SK-N-SH (cell line): ENCODE measurements at regions of chr22 and their contacts with region 1.

Region 1: GRCh38 chr22:22576244-22576988 is 17.4 kb upstream of the PRAME start:
- DNase-seq: peak; percentile 79
- H3K4me3 ChIP-seq: peak overlapping the region in 1 of 2 experiments; percentile 24; a peak in 1 of 4 replicates
- H3K27ac ChIP-seq: no peak overlapping the region
- H3K4me1 ChIP-seq: no peaks in the 10 kb centered on the region
- H3K27me3 ChIP-seq: peaks cover 18% of the 10 kb centered on the region; the same call in 1 of the 2 replicates
- CTCF ChIP-seq: peak; percentile 76
- EP300 ChIP-seq: no peak
- RAD21 ChIP-seq: peak; percentile 68

Region 2: GRCh38 chr22:22558972-22559603 is 17.3 kb before region 1 on chr22 and contains the start of gene PRAME:
- CTCF ChIA-PET with region 1: interaction called, 21 read pairs
- POLR2A ChIA-PET with region 1: interaction called, 3 read pairs
- DNase-seq: peak; percentile 88
- H3K4me3 ChIP-seq: peak within 1 kb of the TSS; percentile 58 to 92
- H3K27ac ChIP-seq: peak within 1 kb of the TSS; percentile 87 to 89
- H3K4me1 ChIP-seq: peaks cover 4 to 31% of the 10 kb centered on the region in 2 experiments; a peak in 3 of 4 replicates
- H3K27me3 ChIP-seq: no peaks in the 10 kb centered on the region
- CTCF ChIP-seq: peak; percentile 98
- EP300 ChIP-seq: peak; percentile 31 to 54; a peak in 1 of 4 replicates
- RAD21 ChIP-seq: peak; percentile 67
- polyA plus RNA-seq, gene PRAME: 193 and 241 TPM in 2 replicates

Region 3: DNA sequence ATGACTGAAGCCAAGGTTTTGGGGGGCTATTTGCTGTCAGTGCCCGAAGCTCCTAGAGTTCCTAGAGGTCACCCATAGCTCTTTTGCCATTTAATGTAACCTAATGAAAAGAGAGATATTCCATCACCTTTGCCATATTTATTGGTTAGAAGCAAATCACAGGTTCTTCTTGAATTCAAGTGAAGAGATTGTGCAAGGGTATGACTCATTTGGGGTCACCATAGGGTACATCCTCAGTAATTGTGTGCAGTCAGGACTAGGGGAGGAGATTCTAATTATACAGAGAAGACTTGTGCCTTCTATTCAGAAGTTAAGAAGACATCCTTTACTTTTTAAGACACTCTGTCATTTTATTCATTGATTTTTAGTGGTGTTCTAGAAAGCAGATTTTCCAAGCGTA is 10.4 kb before region 1 on chr22:
- CTCF ChIA-PET with region 1: interaction called, 30 read pairs
- POLR2A ChIA-PET with region 1: no interaction called
- DNase-seq: no peak
- H3K4me3 ChIP-seq: no peak overlapping the region
- H3K27ac ChIP-seq: no peak overlapping the region
- H3K4me1 ChIP-seq: no peaks in the 10 kb centered on the region
- H3K27me3 ChIP-seq: peaks cover 24% of the 10 kb centered on the region
- CTCF ChIP-seq: no peak
- EP300 ChIP-seq: no peak
- RAD21 ChIP-seq: no peak

Region 4: GRCh38 chr22:22593964-22594656 is 17.7 kb after region 1 on chr22:
- CTCF ChIA-PET with region 1: interaction called, 190 read pairs
- POLR2A ChIA-PET with region 1: no interaction called
- DNase-seq: peak; percentile 73
- H3K4me3 ChIP-seq: no peak overlapping the region
- H3K27ac ChIP-seq: no peak overlapping the region
- H3K4me1 ChIP-seq: no peaks in the 10 kb centered on the region; a peak in 1 of 4 replicates
- H3K27me3 ChIP-seq: no peaks in the 10 kb centered on the region; the same call in 1 of the 2 replicates
- CTCF ChIP-seq: peak; percentile 78
- EP300 ChIP-seq: no peak
- RAD21 ChIP-seq: peak; percentile 80